ENCODE measurements at regions of chr11 and their contacts with region 1.

Region 1: DNA sequence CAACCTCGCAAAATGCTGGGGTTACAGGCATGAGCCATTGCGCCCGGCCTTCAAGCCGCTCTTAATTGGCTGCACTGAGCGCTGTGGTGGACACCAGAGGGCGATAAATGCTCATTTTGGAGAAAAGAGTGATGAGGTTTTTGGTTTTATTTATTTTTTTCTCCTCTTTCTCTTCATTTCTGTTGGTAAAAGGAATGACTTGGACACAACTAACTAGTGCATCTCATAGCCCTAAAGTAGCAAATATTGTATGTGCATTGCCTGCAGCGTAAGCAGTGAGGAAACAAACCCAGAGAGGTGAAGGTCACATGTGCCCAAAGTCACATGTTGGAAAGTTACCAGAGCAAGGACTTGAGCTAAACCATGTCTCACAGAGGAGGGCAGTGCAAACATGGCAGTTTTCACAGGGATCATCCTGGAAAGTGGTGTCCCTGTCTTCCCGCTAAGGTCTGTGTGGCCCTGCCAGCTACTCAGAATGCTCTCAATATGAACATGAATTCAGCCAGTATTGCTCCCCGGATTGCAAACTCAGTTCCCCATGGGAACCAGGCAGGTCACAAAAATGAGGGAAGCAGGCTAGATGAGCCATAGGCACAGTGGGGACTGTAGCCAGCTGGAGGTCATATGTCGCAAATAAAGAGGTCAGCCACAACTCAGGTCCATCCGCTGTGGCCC is 8.6 kb upstream of the CD82 start:
- DNase-seq: peak; percentile 50 to 79 (median 57)
- H3K4me3 ChIP-seq: no peak overlapping the region
- H3K4me3 Mint-ChIP-seq: no peak overlapping the region
- H3K27ac ChIP-seq: no peak overlapping the region
- H3K27ac Mint-ChIP-seq: peak overlapping the region in 3 of 8 donors; percentile 25 to 85 (median 31)
- H3K4me1 ChIP-seq: peaks cover 14% of the 10 kb centered on the region
- H3K4me1 Mint-ChIP-seq: peaks cover 14 to 23% (median 16%) of the 10 kb centered on the region in 3 donors
- H3K27me3 ChIP-seq: no peaks in the 10 kb centered on the region
- H3K27me3 Mint-ChIP-seq: peaks cover 0 to 1% of the 10 kb centered on the region in 2 donors

Region 2: DNA sequence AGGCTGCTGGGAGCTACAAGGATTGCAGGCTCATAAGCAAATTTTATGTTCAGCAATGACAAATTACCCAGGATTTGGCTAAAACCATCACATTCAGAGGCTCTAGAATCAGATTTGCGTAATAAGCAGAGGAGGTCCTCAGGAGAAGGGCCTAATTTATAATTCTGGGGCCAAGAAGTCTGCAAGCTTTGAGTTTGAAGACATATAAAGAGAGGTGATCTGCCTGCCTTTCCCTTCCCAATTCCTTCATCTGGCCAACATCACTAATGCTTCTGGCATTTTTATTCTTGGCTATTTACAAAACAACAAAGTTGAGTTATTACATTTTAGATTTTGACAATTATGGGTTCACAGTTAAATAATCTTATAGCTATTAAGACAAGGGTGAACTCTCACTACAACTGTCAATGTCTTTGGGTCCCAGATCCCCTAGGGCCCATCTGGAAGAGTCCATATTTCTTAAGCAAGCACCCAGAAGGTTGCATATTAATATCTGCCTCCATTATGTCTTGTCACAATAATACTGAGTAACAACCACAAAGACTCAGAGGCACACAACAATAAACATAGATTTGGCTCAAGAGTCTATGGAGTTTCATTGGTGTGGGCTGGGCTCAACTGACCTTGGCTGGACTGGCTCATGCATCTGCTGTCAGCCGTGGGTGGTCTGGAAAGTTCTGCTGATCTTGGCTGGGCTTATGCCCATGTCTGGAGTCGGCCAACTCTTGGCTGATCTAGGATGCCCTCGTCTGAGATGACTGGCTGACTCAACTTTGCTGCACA is 58.6 kb before region 1 on chr11:
- CTCF ChIA-PET with region 1: no interaction called
- POLR2A ChIA-PET with region 1: no interaction called
- DNase-seq: no peak
- H3K4me3 ChIP-seq: no peak overlapping the region
- H3K4me3 Mint-ChIP-seq: no peak overlapping the region
- H3K27ac ChIP-seq: no peak overlapping the region
- H3K27ac Mint-ChIP-seq: no peak overlapping the region
- H3K4me1 ChIP-seq: no peaks in the 10 kb centered on the region
- H3K4me1 Mint-ChIP-seq: no peaks in the 10 kb centered on the region
- H3K27me3 ChIP-seq: no peaks in the 10 kb centered on the region
- H3K27me3 Mint-ChIP-seq: peaks cover 7 to 46% of the 10 kb centered on the region in 2 donors

Region 3: DNA sequence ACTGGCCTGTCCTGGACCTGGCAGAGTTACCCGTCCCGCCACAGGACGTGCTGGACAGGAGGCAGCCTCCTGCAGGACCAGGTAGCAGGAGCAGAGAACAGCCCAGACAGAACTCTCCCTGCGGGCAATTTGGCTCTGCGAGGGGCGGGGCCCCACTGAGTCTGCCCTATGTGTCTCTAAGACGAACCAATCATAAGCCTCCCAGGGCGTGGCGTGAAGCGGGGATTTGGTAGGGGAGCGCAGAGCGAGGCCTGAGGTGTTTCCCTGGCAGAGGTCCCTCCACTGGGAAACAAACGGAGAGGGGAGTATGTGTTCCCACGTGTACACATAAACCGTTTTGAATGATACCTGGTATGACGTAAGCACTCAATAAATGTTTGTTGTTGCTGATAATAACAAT is 16.0 kb after region 1 on chr11:
- CTCF ChIA-PET with region 1: interaction called, 15 read pairs
- POLR2A ChIA-PET with region 1: no interaction called
- DNase-seq: no peak
- H3K4me3 ChIP-seq: no peak overlapping the region
- H3K4me3 Mint-ChIP-seq: peak overlapping the region in 4 of 7 donors; percentile 2 to 72 (median 26)
- H3K27ac ChIP-seq: no peak overlapping the region
- H3K27ac Mint-ChIP-seq: peak overlapping the region in 7 of 8 donors; percentile 43 to 93 (median 87)
- H3K4me1 ChIP-seq: peaks cover 96% of the 10 kb centered on the region
- H3K4me1 Mint-ChIP-seq: peaks cover 83 to 98% (median 92%) of the 10 kb centered on the region in 3 donors
- H3K27me3 ChIP-seq: no peaks in the 10 kb centered on the region
- H3K27me3 Mint-ChIP-seq: peaks cover 0 to 1% of the 10 kb centered on the region in 2 donors